Heart right ventricle (tissue), 16 donors: ENCODE measurements at regions of chr13 and their contacts with region 1.

Region 1: DNA sequence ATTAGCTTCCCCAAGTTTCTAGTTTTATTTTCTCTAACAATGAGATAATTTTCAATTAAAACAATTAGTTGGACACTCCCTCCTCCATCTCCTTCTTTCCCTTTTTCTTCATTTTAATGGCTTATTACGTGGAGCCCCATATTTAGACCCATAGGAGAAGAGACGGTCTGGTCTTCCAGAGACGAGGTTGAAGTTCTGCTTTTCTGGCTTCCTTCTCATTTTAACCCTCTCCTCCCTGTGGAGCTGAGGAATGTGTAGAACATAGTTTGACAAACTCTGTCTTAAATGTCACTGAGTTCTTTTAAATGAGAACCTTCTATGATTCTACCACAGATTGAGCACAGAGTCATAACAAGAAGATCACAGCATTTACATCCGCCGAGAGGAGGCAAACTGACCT is 86.8 kb downstream of the EDNRB start:
- DNase-seq: no peak
- ATAC-seq: no peak
- H3K4me3 ChIP-seq: no peak overlapping the region
- H3K27ac ChIP-seq: peak overlapping the region in 2 of 10 donors; percentile 67 to 84
- H3K4me1 ChIP-seq: peaks cover 0 to 40% (median 7%) of the 10 kb centered on the region in 9 donors
- H3K27me3 ChIP-seq: no peaks in the 10 kb centered on the region
- CTCF ChIP-seq: no peak

Region 2: DNA sequence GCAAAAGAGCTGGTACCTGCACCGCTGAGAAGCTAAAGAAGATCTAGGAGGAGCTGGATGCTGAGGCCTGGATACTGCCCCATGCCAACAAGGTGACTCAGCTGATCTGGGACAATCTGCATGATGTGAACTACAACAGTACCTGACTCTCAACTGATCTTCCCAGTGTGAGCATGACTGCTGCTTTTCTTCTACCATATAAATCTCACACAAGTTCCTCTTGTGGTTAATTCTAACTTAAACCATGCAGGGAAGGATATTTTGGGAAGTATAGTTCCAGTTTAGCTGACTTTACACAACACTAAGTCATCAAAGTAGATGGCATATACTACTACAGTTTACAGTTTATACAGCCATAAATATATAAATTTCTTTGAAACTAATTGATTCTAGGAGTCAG is 42.5 kb before region 1 on chr13:
- intact Hi-C with region 1: no loop called
- DNase-seq: no peak
- ATAC-seq: no peak
- H3K4me3 ChIP-seq: no peak overlapping the region
- H3K27ac ChIP-seq: no peak overlapping the region
- H3K4me1 ChIP-seq: peaks cover 0 to 7% (median 0%) of the 10 kb centered on the region in 9 donors
- H3K27me3 ChIP-seq: no peaks in the 10 kb centered on the region
- CTCF ChIP-seq: no peak

Region 3: GRCh38 chr13:77800219-77800618 is 31.6 kb before region 1 on chr13:
- intact Hi-C with region 1: loop called in 1 of 10 experiments (anchors 2 kb)
- DNase-seq: no peak
- ATAC-seq: no peak
- H3K4me3 ChIP-seq: no peak overlapping the region
- H3K27ac ChIP-seq: no peak overlapping the region
- H3K4me1 ChIP-seq: no peaks in the 10 kb centered on the region
- H3K27me3 ChIP-seq: no peaks in the 10 kb centered on the region
- CTCF ChIP-seq: no peak

Region 4: GRCh38 chr13:77883328-77883727 is 51.5 kb after region 1 on chr13:
- intact Hi-C with region 1: no loop called
- DNase-seq: no peak
- ATAC-seq: no peak
- H3K4me3 ChIP-seq: no peak overlapping the region
- H3K27ac ChIP-seq: no peak overlapping the region
- H3K4me1 ChIP-seq: no peaks in the 10 kb centered on the region
- H3K27me3 ChIP-seq: no peaks in the 10 kb centered on the region
- CTCF ChIP-seq: no peak